CD4-positive, alpha-beta memory T cell (primary cell): ENCODE measurements at regions of chr11 and their contacts with region 1.

Region 1: GRCh38 chr11:95212609-95213008 is 18.4 kb downstream of the SESN3 start:
- DNase-seq: peak in 1 of 5 donors; percentile 13
- H3K4me3 ChIP-seq: no peak overlapping the region
- H3K4me3 Mint-ChIP-seq: no peak overlapping the region
- H3K27ac ChIP-seq: no peak overlapping the region
- H3K27ac Mint-ChIP-seq: no peak overlapping the region
- H3K4me1 ChIP-seq: peaks cover 23% of the 10 kb centered on the region
- H3K4me1 Mint-ChIP-seq: peaks cover 16 to 51% (median 26%) of the 10 kb centered on the region in 4 donors
- H3K27me3 ChIP-seq: no peaks in the 10 kb centered on the region
- H3K27me3 Mint-ChIP-seq: no peaks in the 10 kb centered on the region

Region 2: GRCh38 chr11:95089620-95090542 is 122.7 kb before region 1 on chr11 and contains the start of gene ENDOD1:
- CTCF ChIA-PET with region 1: no interaction called
- POLR2A ChIA-PET with region 1: no interaction called
- intact Hi-C with region 1: no loop called
- DNase-seq: peak; percentile 86 to 89 (median 87)
- H3K4me3 ChIP-seq: peak within 1 kb of the TSS; percentile 45 to 76
- H3K4me3 Mint-ChIP-seq: peak within 1 kb of the TSS; percentile 91 to 96 (median 92)
- H3K27ac ChIP-seq: peak within 1 kb of the TSS; percentile 67
- H3K27ac Mint-ChIP-seq: peak within 1 kb of the TSS; percentile 92 to 99 (median 98)
- H3K4me1 ChIP-seq: peaks cover 43% of the 10 kb centered on the region
- H3K4me1 Mint-ChIP-seq: peaks cover 36 to 55% (median 46%) of the 10 kb centered on the region in 4 donors
- H3K27me3 ChIP-seq: no peaks in the 10 kb centered on the region
- H3K27me3 Mint-ChIP-seq: no peaks in the 10 kb centered on the region
- total RNA-seq, gene ENDOD1: 12.8 to 13.3 TPM

Region 3: DNA sequence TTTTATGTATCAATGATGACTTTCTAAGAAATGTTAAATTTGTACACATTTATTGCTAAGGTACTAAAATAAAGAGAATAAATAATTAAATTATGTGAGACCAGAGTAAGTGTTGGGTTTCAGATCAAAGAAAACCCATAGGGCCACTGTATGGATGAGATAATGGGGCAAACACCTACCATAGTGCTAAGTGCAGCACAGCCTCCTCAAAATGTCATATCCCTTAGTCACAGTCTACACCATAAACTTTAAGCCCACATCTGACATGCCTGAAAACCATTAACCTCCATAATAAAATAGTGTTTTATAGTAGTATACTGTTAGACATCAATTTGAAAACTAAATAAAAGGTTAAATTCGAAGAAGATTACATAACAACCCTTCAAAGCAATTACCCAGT is 19.1 kb before region 1 on chr11:
- CTCF ChIA-PET with region 1: no interaction called
- POLR2A ChIA-PET with region 1: interaction called, 3 read pairs
- intact Hi-C with region 1: loop called (anchors 2 kb)
- DNase-seq: no peak
- H3K4me3 ChIP-seq: no peak overlapping the region
- H3K4me3 Mint-ChIP-seq: no peak overlapping the region
- H3K27ac ChIP-seq: no peak overlapping the region
- H3K27ac Mint-ChIP-seq: peak overlapping the region in 1 of 7 donors; percentile 13
- H3K4me1 ChIP-seq: no peaks in the 10 kb centered on the region
- H3K4me1 Mint-ChIP-seq: peaks cover 21 to 35% (median 27%) of the 10 kb centered on the region in 4 donors
- H3K27me3 ChIP-seq: no peaks in the 10 kb centered on the region
- H3K27me3 Mint-ChIP-seq: no peaks in the 10 kb centered on the region